ENCODE measurements at regions of chr5 and their contacts with region 1.

Region 1: GRCh38 chr5:6576861-6577501 is 55.9 kb downstream of the NSUN2 start:
- DNase-seq: peak in 2 of 10 donors; percentile 29 to 66
- H3K4me3 ChIP-seq: no peak overlapping the region
- H3K27ac ChIP-seq: no peak overlapping the region
- H3K27me3 ChIP-seq: peaks cover 0 to 59% (median 0%) of the 10 kb centered on the region in 45 donors
- CTCF ChIP-seq: peak; percentile 18 to 69 (median 55)

Region 2: DNA sequence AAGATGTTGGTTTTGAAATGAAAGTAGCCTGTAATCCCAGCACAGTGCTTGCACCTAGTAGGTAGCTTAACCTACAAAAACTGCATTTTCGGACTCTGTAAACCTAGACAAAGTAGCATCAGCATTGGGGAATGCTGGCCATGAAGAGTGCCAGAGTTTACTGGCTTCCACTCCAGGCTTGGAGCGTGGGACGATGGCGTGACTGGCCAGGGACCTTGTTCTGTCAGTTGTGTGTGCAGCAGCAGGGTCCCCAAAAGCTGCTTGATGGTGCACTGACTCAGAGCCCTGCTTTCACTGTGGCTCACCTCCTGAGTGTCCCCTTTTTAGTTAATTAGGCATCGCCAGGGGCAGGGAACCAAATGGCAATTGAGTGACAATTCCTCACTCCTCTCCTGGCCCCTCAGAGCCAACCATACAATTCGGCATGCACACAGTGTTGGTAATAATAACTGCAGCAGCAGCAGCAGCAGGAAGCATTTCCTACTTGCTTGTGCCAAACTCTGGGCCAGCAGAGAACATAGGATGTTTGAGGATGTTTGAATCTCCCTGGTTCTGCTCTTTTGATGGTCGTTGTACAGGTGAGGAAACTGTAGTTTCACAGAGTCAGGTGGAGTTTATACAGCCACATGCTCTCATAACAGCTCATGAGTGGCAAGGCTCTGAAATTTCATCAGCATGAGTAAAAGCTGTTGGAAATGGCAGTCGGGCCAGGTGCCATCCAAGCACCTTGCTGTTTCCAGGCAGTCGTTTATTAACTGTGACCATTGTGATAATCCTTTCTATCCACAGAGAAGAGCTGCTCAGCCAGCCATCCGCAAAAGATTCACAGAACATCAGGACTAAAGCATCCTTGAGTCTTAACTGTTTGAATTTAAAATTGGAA is 124.1 kb before region 1 on chr5:
- intact Hi-C with region 1: loop called in 1 of 2 experiments (anchors 10 kb)
- DNase-seq: peak in 2 of 10 donors; percentile 43 to 80
- H3K4me3 ChIP-seq: peak overlapping the region in 52 of 59 donors; percentile 9 to 77 (median 66)
- H3K27ac ChIP-seq: peak overlapping the region in 1 of 59 donors; percentile 37
- H3K27me3 ChIP-seq: peaks cover 0 to 91% (median 23%) of the 10 kb centered on the region in 45 donors
- CTCF ChIP-seq: no peak

Measured in dorsolateral prefrontal cortex (tissue), 120 donors.